Esophagus squamous epithelium (tissue), 5 donors: ENCODE measurements at regions of chr1 and their contacts with region 1.

Region 1: DNA sequence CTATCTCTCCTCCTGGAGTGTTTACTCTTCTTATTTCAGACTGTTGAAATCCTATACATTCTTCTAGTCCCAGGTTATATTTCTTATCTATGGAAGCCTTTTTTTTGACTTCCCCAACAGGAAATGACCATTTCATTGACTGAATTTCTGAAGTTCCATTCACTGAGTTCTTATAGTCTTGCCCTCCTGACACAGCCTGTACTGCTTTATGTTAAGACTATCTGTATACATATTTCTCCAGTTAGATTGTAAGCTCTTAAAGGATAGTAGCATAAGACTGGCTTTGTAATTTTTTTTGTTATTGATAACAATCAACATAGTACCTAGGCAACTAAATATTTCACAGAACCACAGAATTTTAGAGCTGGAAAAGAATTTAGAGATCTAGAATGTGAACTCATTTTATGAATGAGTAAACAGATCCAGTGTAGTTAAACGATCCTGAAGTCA is 14.9 kb upstream of the MACF1 start:
- DNase-seq: no peak
- H3K4me3 ChIP-seq: no peak overlapping the region
- H3K27ac ChIP-seq: no peak overlapping the region
- H3K4me1 ChIP-seq: peaks cover 16 to 58% (median 35%) of the 10 kb centered on the region in 3 donors
- H3K27me3 ChIP-seq: no peaks in the 10 kb centered on the region
- CTCF ChIP-seq: no peak
- POLR2A ChIP-seq: no peak

Region 2: DNA sequence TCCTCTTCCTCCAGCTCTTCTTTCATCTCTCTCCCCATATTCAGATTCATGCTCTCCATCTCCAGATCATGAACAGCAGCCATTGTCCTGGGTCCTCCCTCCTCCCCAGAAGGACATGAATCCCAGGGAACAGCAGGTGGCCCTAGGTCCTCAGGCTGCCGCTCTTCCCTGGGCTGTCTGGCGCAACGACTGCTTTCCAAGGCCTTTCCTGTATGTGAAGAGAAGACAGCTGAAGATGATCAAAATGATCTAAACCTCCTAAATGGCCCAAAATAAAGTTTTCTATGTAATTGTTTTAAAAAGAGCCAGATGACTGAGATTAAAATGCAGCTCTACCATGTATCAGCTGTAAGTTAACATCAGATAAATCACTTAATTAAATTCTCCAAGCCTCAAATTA is 270.5 kb before region 1 on chr1:
- intact Hi-C with region 1: no loop called
- DNase-seq: no peak
- H3K4me3 ChIP-seq: no peak overlapping the region
- H3K27ac ChIP-seq: no peak overlapping the region
- H3K4me1 ChIP-seq: no peaks in the 10 kb centered on the region
- H3K27me3 ChIP-seq: no peaks in the 10 kb centered on the region
- CTCF ChIP-seq: no peak
- POLR2A ChIP-seq: no peak

Region 3: GRCh38 chr1:39105061-39105840 is 84.4 kb before region 1 on chr1:
- intact Hi-C with region 1: loop called (anchors 5 kb)
- DNase-seq: no peak
- H3K4me3 ChIP-seq: peak overlapping the region; percentile 81 to 99 (median 96)
- H3K27ac ChIP-seq: peak overlapping the region; percentile 94 to 97 (median 96)
- H3K4me1 ChIP-seq: peaks cover 34 to 74% (median 43%) of the 10 kb centered on the region in 3 donors
- H3K27me3 ChIP-seq: no peaks in the 10 kb centered on the region
- CTCF ChIP-seq: no peak
- POLR2A ChIP-seq: peak in 2 of 4 donors; percentile 78 to 88

Region 4: DNA sequence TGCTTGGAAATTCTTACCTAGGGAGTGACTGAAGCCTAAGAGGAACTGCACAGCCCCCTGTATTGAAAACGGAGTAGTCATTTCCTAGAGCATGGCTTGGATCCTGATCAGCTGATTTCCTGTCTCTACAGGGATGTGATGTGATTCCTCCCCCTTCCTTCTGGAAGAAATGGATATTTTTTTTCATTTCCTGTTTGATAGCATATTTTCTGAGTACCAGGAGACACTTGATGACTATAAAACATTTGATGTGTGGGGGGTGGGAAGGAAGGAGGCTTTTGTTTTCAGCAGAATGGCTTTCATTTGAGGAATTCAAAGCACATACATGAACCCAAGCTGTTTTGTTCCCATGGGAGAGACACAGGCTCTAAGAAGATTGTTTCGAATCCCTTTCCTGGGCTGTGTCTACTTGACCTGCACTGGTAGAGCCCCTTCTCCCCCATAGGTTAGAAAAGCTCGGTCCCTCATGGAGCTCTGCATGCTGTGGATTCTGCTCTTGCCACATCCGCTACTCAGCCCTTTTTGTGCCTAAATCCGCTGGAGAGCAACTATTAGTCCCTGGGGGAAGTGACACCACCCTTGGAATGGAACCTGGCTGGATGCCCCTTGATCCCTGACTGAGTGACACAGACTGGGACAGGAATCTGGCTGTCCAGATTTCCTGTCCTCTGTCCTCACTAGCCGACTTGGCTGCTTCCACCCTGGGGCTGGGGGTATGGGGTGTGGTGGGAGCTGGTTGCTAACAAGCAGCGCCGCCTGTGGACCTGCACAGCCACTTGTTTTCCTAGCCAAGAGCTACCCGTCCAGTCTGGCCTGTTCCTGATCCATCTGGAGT is 56.9 kb before region 1 on chr1:
- intact Hi-C with region 1: no loop called
- DNase-seq: no peak
- H3K4me3 ChIP-seq: no peak overlapping the region
- H3K27ac ChIP-seq: peak overlapping the region; percentile 68 to 90 (median 76)
- H3K4me1 ChIP-seq: peaks cover 37 to 65% (median 54%) of the 10 kb centered on the region in 3 donors
- H3K27me3 ChIP-seq: no peaks in the 10 kb centered on the region
- CTCF ChIP-seq: peak in 4 of 6 experiments; percentile 32 to 59 (median 40)
- POLR2A ChIP-seq: no peak

Region 5: GRCh38 chr1:39258146-39258924 is 68.7 kb after region 1 on chr1:
- intact Hi-C with region 1: loop called (anchors 5 kb)
- DNase-seq: no peak
- H3K4me3 ChIP-seq: no peak overlapping the region
- H3K27ac ChIP-seq: peak overlapping the region in 3 of 4 donors; percentile 25 to 56 (median 51)
- H3K4me1 ChIP-seq: peaks cover 0 to 17% (median 0%) of the 10 kb centered on the region in 3 donors
- H3K27me3 ChIP-seq: no peaks in the 10 kb centered on the region
- CTCF ChIP-seq: peak; percentile 75 to 93 (median 91)
- POLR2A ChIP-seq: no peak